ENCODE measurements at regions of chr9 and their contacts with region 1.

Region 1: DNA sequence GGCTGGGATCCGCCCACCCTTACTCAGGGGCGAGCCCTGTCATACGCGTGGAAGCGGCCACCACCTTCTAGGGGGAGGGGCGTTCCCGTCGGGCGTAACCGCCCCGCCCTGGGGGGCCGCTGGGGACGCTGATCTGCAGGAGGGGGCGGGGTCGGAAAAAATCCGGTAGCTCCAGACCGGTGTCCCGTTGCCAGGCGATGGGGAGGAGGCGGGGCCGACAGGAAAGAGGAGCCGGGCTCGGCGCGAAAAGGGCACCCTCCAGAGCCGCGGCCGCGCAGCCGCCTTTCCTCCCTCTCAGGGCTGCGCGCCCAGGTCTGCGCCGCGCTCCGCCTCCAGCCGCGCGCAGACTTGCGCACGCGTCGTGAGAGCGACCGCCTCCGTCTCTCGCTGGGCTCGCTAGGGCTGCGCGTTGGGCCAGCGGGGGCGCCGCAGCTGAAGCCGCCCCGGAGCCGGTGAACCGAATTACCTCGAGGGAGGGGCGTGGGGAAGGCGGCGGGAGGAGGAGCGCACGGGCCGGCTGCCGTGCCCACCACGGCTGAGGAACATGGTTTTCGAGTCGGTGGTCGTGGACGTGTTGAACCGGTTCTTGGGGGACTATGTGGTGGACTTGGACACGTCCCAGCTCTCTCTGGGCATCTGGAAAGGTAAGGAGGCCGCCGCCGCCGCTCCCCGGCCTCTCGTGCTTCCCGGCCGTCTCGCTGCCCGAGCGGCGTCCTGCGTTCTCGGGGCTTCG is at the start of gene VPS13A:
- DNase-seq: peak; percentile 75 to 97 (median 86)
- ATAC-seq: peak; percentile 84
- H3K4me3 ChIP-seq: peak within 1 kb of the TSS; percentile 97
- H3K4me3 Mint-ChIP-seq: peak within 1 kb of the TSS; percentile 91
- H3K27ac ChIP-seq: peak within 1 kb of the TSS; percentile 79
- H3K27ac Mint-ChIP-seq: peak within 1 kb of the TSS; percentile 89
- H3K4me1 ChIP-seq: peaks cover 17% of the 10 kb centered on the region
- H3K4me1 Mint-ChIP-seq: peaks cover 41% of the 10 kb centered on the region
- H3K27me3 ChIP-seq: no peaks in the 10 kb centered on the region
- H3K27me3 Mint-ChIP-seq: no peaks in the 10 kb centered on the region
- CTCF ChIP-seq: peak; percentile 40
- total RNA-seq, gene VPS13A: 37.3 to 41.1 TPM

Region 2: GRCh38 chr9:76458903-76459690 is 718.2 kb before region 1 on chr9 and contains the start of gene GCNT1:
- CTCF ChIA-PET with region 1: no interaction called
- POLR2A ChIA-PET with region 1: no interaction called
- intact Hi-C with region 1: loop called in 1 of 2 experiments (anchors 10 kb)
- DNase-seq: peak; percentile 67 to 94 (median 86)
- ATAC-seq: peak; percentile 93
- H3K4me3 ChIP-seq: peak within 1 kb of the TSS; percentile 75
- H3K4me3 Mint-ChIP-seq: peak within 1 kb of the TSS; percentile 92
- H3K27ac ChIP-seq: no peak within 1 kb of the TSS
- H3K27ac Mint-ChIP-seq: peak within 1 kb of the TSS; percentile 1
- H3K4me1 ChIP-seq: peaks cover 25% of the 10 kb centered on the region
- H3K4me1 Mint-ChIP-seq: peaks cover 25% of the 10 kb centered on the region
- H3K27me3 ChIP-seq: no peaks in the 10 kb centered on the region
- H3K27me3 Mint-ChIP-seq: no peaks in the 10 kb centered on the region
- CTCF ChIP-seq: peak; percentile 43
- total RNA-seq, gene GCNT1: 0.36 to 0.53 TPM

Region 3: DNA sequence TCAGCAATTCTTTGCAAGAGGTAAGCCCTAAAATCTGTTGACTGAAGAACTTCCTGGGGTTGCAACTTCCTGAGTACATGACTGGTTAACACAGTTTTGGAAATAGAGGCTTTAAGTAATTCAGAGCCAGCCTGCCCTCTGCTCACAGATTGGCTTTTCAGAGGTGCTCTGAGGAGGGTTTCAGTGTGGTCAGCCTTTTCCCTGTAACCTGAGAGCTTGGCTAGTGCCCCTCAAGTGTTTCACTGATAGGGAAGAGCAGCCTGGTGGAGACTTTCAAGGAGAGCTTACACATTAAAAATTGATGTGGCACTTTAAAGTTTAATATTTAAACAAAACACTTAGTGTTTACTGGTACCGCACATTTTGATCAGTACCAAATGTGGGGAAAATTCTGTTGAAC is 214.6 kb before region 1 on chr9:
- CTCF ChIA-PET with region 1: no interaction called
- POLR2A ChIA-PET with region 1: no interaction called
- intact Hi-C with region 1: no loop called
- DNase-seq: no peak
- ATAC-seq: no peak
- H3K4me3 ChIP-seq: no peak overlapping the region
- H3K4me3 Mint-ChIP-seq: no peak overlapping the region
- H3K27ac ChIP-seq: no peak overlapping the region
- H3K27ac Mint-ChIP-seq: no peak overlapping the region
- H3K4me1 ChIP-seq: no peaks in the 10 kb centered on the region
- H3K4me1 Mint-ChIP-seq: no peaks in the 10 kb centered on the region
- H3K27me3 ChIP-seq: no peaks in the 10 kb centered on the region
- H3K27me3 Mint-ChIP-seq: peaks cover 13% of the 10 kb centered on the region
- CTCF ChIP-seq: no peak

Region 4: GRCh38 chr9:77099388-77099787 is 77.9 kb before region 1 on chr9:
- CTCF ChIA-PET with region 1: no interaction called
- POLR2A ChIA-PET with region 1: no interaction called
- intact Hi-C with region 1: no loop called
- DNase-seq: no peak
- ATAC-seq: no peak
- H3K4me3 ChIP-seq: no peak overlapping the region
- H3K4me3 Mint-ChIP-seq: no peak overlapping the region
- H3K27ac ChIP-seq: no peak overlapping the region
- H3K27ac Mint-ChIP-seq: no peak overlapping the region
- H3K4me1 ChIP-seq: no peaks in the 10 kb centered on the region
- H3K4me1 Mint-ChIP-seq: no peaks in the 10 kb centered on the region
- H3K27me3 ChIP-seq: peaks cover 3 to 7% of the 10 kb centered on the region in 2 experiments
- H3K27me3 Mint-ChIP-seq: peaks cover 38% of the 10 kb centered on the region
- CTCF ChIP-seq: no peak

Region 5: DNA sequence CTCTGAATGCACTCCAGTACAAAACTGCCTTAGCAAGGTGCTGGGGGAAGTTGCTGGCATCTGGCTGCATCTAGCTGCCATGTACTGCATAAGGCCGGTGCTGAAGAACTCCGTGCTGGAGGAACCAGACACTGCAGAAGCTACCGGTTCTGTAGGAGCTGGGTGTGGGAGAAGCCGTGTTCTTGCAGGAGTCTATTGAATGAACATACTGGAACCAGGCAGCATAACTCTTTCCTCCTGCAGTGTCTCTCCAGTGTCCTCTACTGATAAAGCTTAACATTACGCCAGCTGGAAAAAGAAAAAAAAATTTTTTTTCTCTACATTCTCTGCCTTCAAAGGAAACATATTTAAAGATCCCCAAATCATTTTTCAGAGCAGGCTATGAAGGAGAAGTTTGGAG is 38.5 kb after region 1 on chr9:
- CTCF ChIA-PET with region 1: no interaction called
- POLR2A ChIA-PET with region 1: no interaction called
- intact Hi-C with region 1: loop called (anchors 5 kb)
- DNase-seq: no peak
- ATAC-seq: no peak
- H3K4me3 ChIP-seq: no peak overlapping the region
- H3K4me3 Mint-ChIP-seq: no peak overlapping the region
- H3K27ac ChIP-seq: no peak overlapping the region
- H3K27ac Mint-ChIP-seq: no peak overlapping the region
- H3K4me1 ChIP-seq: no peaks in the 10 kb centered on the region
- H3K4me1 Mint-ChIP-seq: no peaks in the 10 kb centered on the region
- H3K27me3 ChIP-seq: no peaks in the 10 kb centered on the region
- H3K27me3 Mint-ChIP-seq: no peaks in the 10 kb centered on the region
- CTCF ChIP-seq: peak; percentile 21

Region 6: GRCh38 chr9:78235756-78236538 is 1058.6 kb after region 1 on chr9 and contains the start of gene CEP78:
- CTCF ChIA-PET with region 1: no interaction called
- POLR2A ChIA-PET with region 1: no interaction called
- intact Hi-C with region 1: loop called in 1 of 2 experiments (anchors 5 kb)
- DNase-seq: peak; percentile 73 to 94 (median 82)
- ATAC-seq: peak; percentile 99
- H3K4me3 ChIP-seq: peak within 1 kb of the TSS; percentile 75
- H3K4me3 Mint-ChIP-seq: no peak within 1 kb of the TSS
- H3K27ac ChIP-seq: peak within 1 kb of the TSS; percentile 18 to 72
- H3K27ac Mint-ChIP-seq: peak within 1 kb of the TSS; percentile 90
- H3K4me1 ChIP-seq: peaks cover 30% of the 10 kb centered on the region
- H3K4me1 Mint-ChIP-seq: peaks cover 39% of the 10 kb centered on the region
- H3K27me3 ChIP-seq: no peaks in the 10 kb centered on the region
- H3K27me3 Mint-ChIP-seq: no peaks in the 10 kb centered on the region
- CTCF ChIP-seq: no peak
- total RNA-seq, gene CEP78: 10.5 to 12.1 TPM

Region 7: GRCh38 chr9:78296893-78297671 is 1119.8 kb after region 1 on chr9 and contains the start of gene PSAT1:
- CTCF ChIA-PET with region 1: no interaction called
- POLR2A ChIA-PET with region 1: interaction called, 10 read pairs
- intact Hi-C with region 1: loop called in 1 of 2 experiments (anchors 5 kb)
- DNase-seq: peak; percentile 74 to 94 (median 82)
- ATAC-seq: peak; percentile 99
- H3K4me3 ChIP-seq: peak within 1 kb of the TSS; percentile 95
- H3K4me3 Mint-ChIP-seq: peak within 1 kb of the TSS; percentile 95
- H3K27ac ChIP-seq: peak within 1 kb of the TSS in 1 of 2 donors; percentile 13
- H3K27ac Mint-ChIP-seq: peak within 1 kb of the TSS; percentile 57
- H3K4me1 ChIP-seq: peaks cover 28% of the 10 kb centered on the region
- H3K4me1 Mint-ChIP-seq: peaks cover 28% of the 10 kb centered on the region
- H3K27me3 ChIP-seq: no peaks in the 10 kb centered on the region
- H3K27me3 Mint-ChIP-seq: peaks cover 4% of the 10 kb centered on the region
- CTCF ChIP-seq: no peak
- total RNA-seq, gene PSAT1: 0.30 to 0.61 TPM

Region 8: DNA sequence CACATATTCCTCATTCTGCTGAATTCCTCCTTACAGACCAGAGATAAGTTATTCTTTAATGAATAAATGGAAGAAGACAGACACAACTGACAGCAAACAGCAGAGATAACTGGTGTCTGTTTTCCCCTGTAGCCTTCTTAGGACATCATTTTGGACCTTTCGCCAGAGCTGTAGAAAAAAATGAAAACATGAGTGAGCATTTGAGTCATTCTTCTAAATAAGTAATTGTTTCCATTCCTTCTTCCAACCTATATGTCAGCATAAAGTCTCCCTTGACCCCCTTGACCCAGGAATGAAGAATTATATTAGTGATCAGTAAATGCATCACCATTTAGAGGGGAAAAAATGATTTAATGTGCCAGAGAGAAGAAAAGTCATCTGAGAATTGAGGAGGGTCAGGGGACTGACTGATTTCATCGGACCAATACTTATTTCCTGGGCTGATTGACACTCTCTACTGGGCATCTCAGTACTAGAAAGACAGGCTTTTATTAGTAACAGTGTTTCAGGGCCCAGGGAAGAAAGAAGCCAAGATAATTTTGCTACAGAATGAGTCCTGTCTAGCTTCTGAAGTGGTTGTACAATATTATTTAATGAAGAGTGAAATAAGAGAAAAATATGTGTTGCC is 1716.6 kb after region 1 on chr9:
- CTCF ChIA-PET with region 1: no interaction called
- POLR2A ChIA-PET with region 1: no interaction called
- intact Hi-C with region 1: no loop called
- DNase-seq: no peak
- ATAC-seq: no peak
- H3K4me3 ChIP-seq: no peak overlapping the region
- H3K4me3 Mint-ChIP-seq: no peak overlapping the region
- H3K27ac ChIP-seq: no peak overlapping the region
- H3K27ac Mint-ChIP-seq: no peak overlapping the region
- H3K4me1 ChIP-seq: no peaks in the 10 kb centered on the region
- H3K4me1 Mint-ChIP-seq: no peaks in the 10 kb centered on the region
- H3K27me3 ChIP-seq: no peaks in the 10 kb centered on the region
- H3K27me3 Mint-ChIP-seq: no peaks in the 10 kb centered on the region
- CTCF ChIP-seq: no peak